Activated naive CD4-positive, alpha-beta T cell treated with anti-CD3 and anti-CD28 coated beads for 36 hours (primary cell): ENCODE measurements at regions of chr12 and their contacts with region 1.

Region 1: DNA sequence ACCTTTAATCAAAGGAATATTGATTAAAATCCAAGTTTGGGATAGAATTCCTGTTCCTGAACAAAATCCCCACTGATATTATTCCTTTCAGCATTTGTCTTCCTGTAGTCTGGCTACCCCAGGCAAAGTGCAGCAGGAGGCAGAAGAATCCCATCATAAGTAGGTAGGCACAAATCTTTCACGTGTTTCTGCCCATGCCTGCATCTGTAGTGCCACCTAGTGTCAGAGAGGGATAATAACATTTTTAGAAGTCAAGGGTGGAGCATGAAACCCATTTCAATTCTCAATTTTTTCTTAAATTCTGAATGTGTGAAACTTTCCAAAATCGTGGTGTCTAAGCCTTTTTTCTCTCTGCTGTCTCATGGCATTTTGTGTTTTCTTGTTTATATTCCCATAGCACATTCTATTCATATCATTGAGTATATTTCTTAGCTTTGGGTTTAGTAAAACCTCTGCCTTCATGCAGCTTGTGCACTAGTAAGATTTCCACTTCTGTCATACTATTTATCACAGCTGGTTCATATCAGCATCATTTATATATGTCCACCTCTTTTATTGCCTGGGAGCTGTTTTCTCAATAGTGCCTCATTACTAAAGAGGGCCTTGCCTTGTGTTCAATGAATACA is 47.8 kb upstream of the RERG start:
- DNase-seq: peak; percentile 56
- H3K4me3 Mint-ChIP-seq: no peak overlapping the region
- H3K27ac Mint-ChIP-seq: no peak overlapping the region
- H3K4me1 Mint-ChIP-seq: no peaks in the 10 kb centered on the region
- H3K27me3 Mint-ChIP-seq: no peaks in the 10 kb centered on the region

Region 2: GRCh38 chr12:14629832-14630710 is 639.0 kb before region 1 on chr12:
- CTCF ChIA-PET with region 1: no interaction called
- intact Hi-C with region 1: loop called (anchors 2 kb)
- DNase-seq: peak; percentile 79
- H3K4me3 Mint-ChIP-seq: no peak overlapping the region
- H3K27ac Mint-ChIP-seq: no peak overlapping the region
- H3K4me1 Mint-ChIP-seq: no peaks in the 10 kb centered on the region
- H3K27me3 Mint-ChIP-seq: no peaks in the 10 kb centered on the region

Region 3: DNA sequence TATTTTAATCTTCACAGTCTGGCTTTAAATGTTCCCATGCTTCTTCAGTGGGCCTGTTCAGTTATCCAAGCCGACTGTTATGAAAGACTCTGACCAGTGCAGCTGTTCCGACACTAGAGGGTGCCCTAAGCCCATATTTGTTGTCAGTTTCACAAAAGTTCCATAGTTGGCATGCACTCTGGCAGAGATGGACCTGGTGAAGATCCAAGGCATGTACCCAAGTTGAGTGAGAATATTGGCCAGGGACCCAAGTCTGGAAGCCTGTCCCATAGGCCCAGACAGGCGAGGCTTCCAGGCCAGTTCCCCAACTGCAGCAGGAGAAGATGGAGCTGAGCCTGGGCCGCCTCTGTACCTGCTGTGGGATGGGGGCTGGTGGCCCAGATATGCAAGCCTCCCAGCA is 545.3 kb before region 1 on chr12:
- CTCF ChIA-PET with region 1: interaction called, 4 read pairs
- intact Hi-C with region 1: loop called (anchors 1 kb)
- DNase-seq: peak; percentile 74
- H3K4me3 Mint-ChIP-seq: no peak overlapping the region
- H3K27ac Mint-ChIP-seq: no peak overlapping the region
- H3K4me1 Mint-ChIP-seq: no peaks in the 10 kb centered on the region
- H3K27me3 Mint-ChIP-seq: no peaks in the 10 kb centered on the region

Region 4: DNA sequence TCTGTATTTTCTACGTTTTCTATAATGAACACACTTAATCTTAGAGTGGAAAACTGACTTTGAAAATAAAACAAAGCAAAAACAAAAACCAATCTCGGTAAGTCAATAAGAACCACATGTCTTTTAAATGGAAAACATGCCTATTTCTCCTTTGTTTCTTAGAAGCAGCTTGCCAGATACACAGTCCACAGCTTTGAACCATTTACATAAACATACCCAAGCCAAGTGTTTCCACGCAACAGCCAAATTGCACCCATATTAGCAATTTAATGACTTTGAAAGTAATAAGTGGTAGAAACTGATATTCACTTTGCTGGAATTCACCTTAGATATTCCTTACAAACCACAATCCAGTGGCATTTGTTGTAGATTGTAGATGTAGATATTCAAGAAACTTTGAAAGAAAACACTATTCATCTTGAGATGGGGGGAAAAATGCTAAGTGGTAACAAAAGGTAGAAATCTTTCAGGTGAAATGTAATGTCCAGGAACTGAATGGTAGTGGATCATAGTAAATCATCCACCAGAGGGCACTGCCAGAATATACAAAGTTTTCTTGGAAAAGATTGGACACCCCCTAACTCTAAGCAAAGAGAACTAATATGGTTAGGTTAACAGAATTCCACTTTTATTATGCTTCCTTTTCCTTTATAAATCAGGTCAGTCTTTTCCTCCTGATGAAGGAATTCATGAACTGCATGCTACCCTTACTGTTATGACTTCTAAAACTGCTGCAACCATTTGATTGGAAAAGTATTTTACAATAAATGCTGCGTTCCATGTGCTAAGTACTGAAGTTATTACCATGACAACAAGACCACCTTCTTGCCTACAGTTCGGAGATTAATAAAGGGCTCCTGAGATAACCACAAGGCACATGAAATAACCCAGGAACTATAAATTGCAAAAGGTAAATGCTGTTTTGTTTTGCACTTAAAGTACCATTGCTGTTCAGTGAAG is 117.6 kb before region 1 on chr12:
- CTCF ChIA-PET with region 1: interaction called, 3 read pairs
- intact Hi-C with region 1: loop called (anchors 1 kb)
- DNase-seq: no peak
- H3K4me3 Mint-ChIP-seq: no peak overlapping the region
- H3K27ac Mint-ChIP-seq: no peak overlapping the region
- H3K4me1 Mint-ChIP-seq: no peaks in the 10 kb centered on the region
- H3K27me3 Mint-ChIP-seq: peaks cover 8% of the 10 kb centered on the region

Region 5: GRCh38 chr12:15227004-15227679 is 41.9 kb before region 1 on chr12:
- CTCF ChIA-PET with region 1: interaction called, 9 read pairs
- intact Hi-C with region 1: loop called (anchors 1 kb)
- DNase-seq: peak; percentile 56
- H3K4me3 Mint-ChIP-seq: no peak overlapping the region
- H3K27ac Mint-ChIP-seq: no peak overlapping the region
- H3K4me1 Mint-ChIP-seq: no peaks in the 10 kb centered on the region
- H3K27me3 Mint-ChIP-seq: peaks cover 18% of the 10 kb centered on the region

Region 6: DNA sequence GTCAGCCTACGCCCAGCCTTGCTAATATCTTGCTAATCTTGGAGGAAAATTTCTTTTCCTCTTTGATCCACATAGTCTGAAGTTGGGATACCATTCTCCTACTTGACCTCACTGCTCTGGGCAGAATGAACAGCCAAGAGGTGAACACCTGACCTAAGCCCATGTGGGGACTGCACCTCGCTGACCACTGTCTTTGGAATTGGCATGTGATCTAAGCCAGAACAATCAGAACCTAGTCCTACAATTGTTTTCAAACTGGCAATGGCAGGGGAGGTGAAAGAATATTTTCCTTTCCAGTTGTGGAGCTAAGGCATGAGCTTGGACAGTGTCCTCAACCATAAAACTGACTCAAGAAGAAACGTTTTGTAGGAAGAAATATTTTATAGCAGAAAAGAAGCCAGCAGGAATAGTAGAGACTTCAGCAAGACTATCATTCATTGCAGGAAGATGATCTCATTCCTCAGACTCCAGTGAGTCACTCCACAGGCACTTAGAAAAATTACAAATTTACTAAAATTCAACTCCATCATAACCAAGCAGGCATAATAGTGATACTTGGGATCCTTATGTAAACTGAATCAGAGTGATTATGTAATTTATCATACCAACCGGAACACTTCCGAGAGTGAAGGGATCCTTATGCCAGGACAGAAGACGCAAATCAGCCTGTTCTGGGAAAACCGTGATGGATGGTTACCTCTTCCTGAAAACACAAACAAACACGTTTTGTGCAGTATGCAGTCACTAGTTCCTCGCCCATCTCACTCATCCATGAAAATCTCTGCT is 67.9 kb after region 1 on chr12:
- CTCF ChIA-PET with region 1: no interaction called
- intact Hi-C with region 1: no loop called
- DNase-seq: no peak
- H3K4me3 Mint-ChIP-seq: no peak overlapping the region
- H3K27ac Mint-ChIP-seq: no peak overlapping the region
- H3K4me1 Mint-ChIP-seq: no peaks in the 10 kb centered on the region
- H3K27me3 Mint-ChIP-seq: peaks cover 9% of the 10 kb centered on the region

Region 7: DNA sequence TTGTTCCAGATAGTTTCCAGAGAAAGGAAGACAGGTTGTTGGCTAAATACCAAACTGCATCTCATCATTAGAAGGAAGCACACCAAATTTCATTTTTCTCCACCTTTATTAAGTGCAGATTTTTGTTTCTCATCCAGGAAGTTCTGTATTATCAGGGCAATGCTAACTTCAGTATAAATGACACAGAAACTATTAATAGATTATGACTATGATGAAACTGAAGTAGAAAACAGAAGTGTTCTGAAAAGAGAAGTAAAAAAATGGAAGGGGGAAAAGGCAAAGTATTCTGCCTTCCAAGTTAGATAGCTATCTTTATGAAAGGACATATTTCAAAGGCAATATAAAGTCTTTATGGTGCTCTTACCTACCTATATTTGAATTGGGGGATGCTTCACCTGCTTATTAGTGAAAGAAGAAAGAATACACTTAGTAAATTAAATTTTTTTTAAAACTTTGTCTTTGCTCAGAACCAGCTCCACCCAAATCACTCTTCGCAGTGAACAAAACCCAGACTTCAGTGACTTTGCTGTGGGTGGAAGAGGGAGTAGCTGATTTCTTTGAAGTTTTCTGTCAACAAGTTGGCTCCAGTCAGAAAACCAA is 277.2 kb after region 1 on chr12:
- CTCF ChIA-PET with region 1: no interaction called
- intact Hi-C with region 1: no loop called
- DNase-seq: peak; percentile 38
- H3K4me3 Mint-ChIP-seq: no peak overlapping the region
- H3K27ac Mint-ChIP-seq: peak overlapping the region; percentile 79
- H3K4me1 Mint-ChIP-seq: peaks cover 64% of the 10 kb centered on the region
- H3K27me3 Mint-ChIP-seq: no peaks in the 10 kb centered on the region